ENCODE measurements at regions of chr2 and their contacts with region 1.

Region 1: GRCh38 chr2:135709992-135710391 is 31.7 kb upstream of the UBXN4 start:
- DNase-seq: peak; percentile 79
- H3K4me3 Mint-ChIP-seq: no peak overlapping the region
- H3K27ac Mint-ChIP-seq: no peak overlapping the region
- H3K4me1 Mint-ChIP-seq: no peaks in the 10 kb centered on the region
- H3K27me3 Mint-ChIP-seq: no peaks in the 10 kb centered on the region

Region 2: DNA sequence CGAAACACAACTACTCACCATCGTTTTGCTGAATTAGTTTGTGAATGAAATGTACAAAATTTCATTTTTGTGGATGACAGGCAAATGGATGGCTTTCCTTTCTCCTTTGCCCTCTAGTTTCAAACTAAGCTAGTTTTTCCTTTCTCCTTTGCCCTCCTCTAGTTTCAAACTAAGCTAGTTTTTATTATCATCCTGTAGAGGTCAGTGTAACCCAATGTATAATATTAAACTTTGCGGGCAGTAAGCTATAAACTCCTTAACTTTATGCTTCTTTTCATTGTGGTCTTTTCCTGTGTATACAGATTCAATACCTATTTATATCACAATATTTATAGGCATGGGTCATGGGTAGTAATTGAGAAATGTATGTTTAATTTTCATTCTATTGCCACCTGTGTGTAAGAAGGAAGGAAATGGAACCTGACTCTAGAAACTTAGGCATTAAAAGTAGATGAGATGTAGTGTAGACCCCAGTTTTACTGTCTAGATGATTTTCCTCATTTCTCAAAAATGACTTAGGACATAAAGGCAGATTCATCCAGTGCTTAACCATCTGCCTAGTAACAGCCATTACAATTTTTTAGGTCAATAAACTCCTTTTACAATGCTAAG is 720.9 kb before region 1 on chr2:
- CTCF ChIA-PET with region 1: interaction called, 18 read pairs
- POLR2A ChIA-PET with region 1: no interaction called
- intact Hi-C with region 1: no loop called
- DNase-seq: no peak
- H3K4me3 Mint-ChIP-seq: no peak overlapping the region
- H3K27ac Mint-ChIP-seq: no peak overlapping the region
- H3K4me1 Mint-ChIP-seq: no peaks in the 10 kb centered on the region
- H3K27me3 Mint-ChIP-seq: peaks cover 2% of the 10 kb centered on the region

Region 3: GRCh38 chr2:135473567-135473966 is 236.4 kb before region 1 on chr2:
- CTCF ChIA-PET with region 1: interaction called, 38 read pairs
- POLR2A ChIA-PET with region 1: no interaction called
- intact Hi-C with region 1: no loop called
- DNase-seq: peak; percentile 42
- H3K4me3 Mint-ChIP-seq: no peak overlapping the region
- H3K27ac Mint-ChIP-seq: no peak overlapping the region
- H3K4me1 Mint-ChIP-seq: no peaks in the 10 kb centered on the region
- H3K27me3 Mint-ChIP-seq: no peaks in the 10 kb centered on the region

Region 4: DNA sequence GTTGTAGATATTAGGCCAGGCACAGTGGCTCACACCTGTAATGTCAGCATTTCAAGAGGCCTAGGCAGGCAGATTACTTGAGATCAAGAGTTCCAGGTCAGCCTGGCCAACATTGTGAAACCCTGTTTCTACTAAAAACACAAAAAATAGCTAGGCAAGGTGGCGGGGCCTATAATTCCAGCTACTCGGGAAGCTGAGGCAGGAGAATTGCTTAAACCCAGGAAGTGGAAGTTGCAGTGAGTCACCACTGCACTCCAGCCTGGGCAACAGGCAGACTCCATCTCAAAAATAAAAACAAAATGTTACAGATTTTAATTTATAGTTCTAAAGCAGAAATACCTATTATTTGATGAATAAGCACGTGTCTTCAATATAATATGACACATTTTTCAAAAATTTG is 34.0 kb before region 1 on chr2:
- CTCF ChIA-PET with region 1: interaction called, 13 read pairs
- POLR2A ChIA-PET with region 1: no interaction called
- intact Hi-C with region 1: no loop called
- DNase-seq: no peak
- H3K4me3 Mint-ChIP-seq: no peak overlapping the region
- H3K27ac Mint-ChIP-seq: no peak overlapping the region
- H3K4me1 Mint-ChIP-seq: no peaks in the 10 kb centered on the region
- H3K27me3 Mint-ChIP-seq: no peaks in the 10 kb centered on the region